ENCODE measurements at regions of chr18 and their contacts with region 1.

Region 1: DNA sequence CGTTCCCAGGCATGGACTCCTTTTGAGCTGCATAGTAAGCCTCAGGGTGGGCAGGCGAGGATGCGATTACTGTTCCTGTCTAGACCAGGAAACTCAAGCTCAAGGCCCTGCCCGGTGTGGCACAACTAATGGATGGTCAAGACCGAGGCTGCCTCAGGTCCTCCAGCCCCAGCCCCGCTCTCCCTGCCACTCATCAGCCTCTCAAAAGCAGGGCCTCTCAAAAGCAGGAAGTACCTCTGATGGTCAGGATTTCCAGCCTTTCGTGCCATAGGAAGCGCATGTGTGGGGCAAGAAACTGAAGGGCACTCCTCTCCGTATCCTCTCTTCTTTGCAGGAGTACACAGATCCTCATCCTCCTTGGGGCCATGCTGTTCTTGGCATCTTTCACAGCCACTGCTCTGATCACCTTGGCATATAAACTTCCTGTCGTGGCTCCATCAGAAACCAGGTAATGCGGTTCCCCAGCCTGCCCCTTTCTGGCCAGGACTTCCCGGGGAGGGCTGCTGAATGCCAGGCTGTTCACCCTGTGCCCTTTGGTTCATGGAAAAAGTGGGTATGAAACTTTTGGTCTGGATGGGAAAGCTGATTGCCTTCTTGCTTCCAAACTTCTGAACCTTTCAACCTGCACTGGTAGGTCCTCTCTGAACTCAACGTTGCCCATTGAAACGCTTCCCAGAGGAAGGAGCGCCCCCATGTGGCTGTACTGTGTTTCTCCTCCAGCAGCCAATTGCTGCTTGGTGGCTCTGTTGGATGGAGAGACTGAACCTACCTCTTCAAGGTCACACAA is 82.8 kb upstream of the SEC11C start:
- DNase-seq: peak; percentile 82 to 87
- ATAC-seq: peak; percentile 30 to 86 (median 70)
- H3K4me3 ChIP-seq: no peak overlapping the region
- H3K27ac ChIP-seq: peak overlapping the region in 4 of 10 donors; percentile 12 to 26 (median 23)
- H3K4me1 ChIP-seq: peaks cover 0 to 33% (median 5%) of the 10 kb centered on the region in 9 donors
- H3K27me3 ChIP-seq: no peaks in the 10 kb centered on the region
- CTCF ChIP-seq: peak in 8 of 9 donors; percentile 40 to 94 (median 87)

Region 2: GRCh38 chr18:58991167-58991798 is 65.6 kb before region 1 on chr18:
- intact Hi-C with region 1: loop called in 3 of 10 experiments (anchors 5 kb)
- DNase-seq: no peak
- ATAC-seq: peak in 7 of 8 donors; percentile 27 to 78 (median 52)
- H3K4me3 ChIP-seq: no peak overlapping the region
- H3K27ac ChIP-seq: peak overlapping the region in 9 of 10 donors; percentile 70 to 94 (median 87)
- H3K4me1 ChIP-seq: peaks cover 8 to 68% (median 56%) of the 10 kb centered on the region in 9 donors
- H3K27me3 ChIP-seq: no peaks in the 10 kb centered on the region
- CTCF ChIP-seq: no peak

Region 3: DNA sequence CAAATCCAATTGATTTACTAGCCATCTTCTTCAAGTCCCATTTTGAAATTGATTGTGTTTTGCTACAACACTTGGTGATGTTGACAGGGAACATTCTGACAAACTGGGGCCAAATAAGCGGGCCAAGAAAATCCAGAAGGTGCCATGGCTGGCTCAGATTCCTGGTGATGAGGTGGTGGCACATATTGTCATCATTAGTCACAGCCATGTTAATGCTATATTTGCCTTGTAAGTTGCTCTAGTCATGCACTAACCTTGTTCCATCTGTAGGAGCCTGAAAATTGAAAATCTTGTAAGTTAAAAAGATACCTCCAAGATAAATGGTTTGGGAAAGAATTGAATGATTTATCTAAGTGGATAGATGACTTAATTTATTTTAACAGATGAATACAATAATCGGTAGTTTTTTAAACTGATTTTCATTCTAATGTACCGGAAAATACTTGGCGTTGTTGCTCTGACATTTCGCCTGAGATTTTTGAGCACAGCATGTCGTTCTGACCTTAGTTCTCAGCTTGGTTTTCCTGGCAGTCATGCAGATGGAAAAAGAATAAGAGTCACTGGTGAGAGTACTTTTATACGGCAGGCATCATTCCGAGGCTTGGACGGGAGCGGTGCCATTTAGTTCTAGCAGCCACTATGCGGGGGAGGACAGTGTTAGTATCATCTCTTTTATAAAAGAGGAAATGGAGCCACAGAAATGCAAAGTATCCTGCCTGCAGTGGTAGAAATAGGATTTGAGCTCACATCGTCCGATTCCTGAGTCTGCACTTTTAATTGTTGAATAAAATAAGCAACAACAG is 58.3 kb before region 1 on chr18:
- intact Hi-C with region 1: loop called in 4 of 10 experiments (anchors 5 kb)
- DNase-seq: peak; percentile 52 to 83
- ATAC-seq: peak; percentile 57 to 92 (median 80)
- H3K4me3 ChIP-seq: peak overlapping the region in 6 of 10 donors; percentile 3 to 34 (median 19)
- H3K27ac ChIP-seq: peak overlapping the region; percentile 70 to 94 (median 87)
- H3K4me1 ChIP-seq: peaks cover 6 to 68% (median 49%) of the 10 kb centered on the region in 9 donors
- H3K27me3 ChIP-seq: no peaks in the 10 kb centered on the region
- CTCF ChIP-seq: peak in 1 of 9 donors; percentile 4

Region 4: DNA sequence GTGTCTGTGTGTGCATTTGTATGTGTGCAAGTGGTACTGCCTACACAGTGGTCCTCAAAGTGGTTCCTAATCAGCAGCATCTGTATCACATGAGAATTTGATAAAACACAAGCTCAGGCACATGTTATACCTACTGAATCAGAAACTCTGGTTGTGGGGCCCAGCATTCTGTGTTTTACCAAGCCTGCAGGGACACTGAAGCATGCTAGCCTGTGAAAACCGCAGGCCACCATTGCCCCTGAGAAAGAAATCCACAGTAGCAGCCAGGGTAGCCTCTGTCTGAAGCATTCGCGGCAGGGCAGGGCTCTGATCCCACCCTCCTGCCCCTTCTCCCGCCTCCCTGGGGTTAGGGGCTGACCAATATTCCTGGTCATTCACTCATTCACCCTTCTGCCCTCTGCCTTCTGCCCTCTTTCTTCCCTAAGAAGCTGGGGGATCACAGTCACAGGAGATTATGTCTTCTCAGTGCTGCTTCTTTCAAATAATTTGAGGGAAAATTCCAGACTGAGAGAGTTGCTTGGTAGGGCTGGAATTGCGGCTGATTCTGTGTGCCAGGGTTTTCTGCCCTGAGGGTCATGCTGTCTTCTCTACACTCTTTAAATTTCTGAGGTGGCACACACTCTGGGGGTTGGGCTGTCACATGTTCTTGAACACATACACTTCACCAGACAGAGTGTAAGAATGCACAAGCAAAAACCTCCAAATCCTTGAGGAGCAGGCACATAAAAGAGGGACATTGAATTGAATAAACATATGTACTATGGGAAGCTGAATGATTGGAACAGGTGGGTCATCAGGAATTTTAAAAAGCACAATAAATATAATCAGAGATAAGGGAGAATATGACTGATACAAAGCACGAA is 43.9 kb before region 1 on chr18:
- intact Hi-C with region 1: no loop called
- DNase-seq: no peak
- ATAC-seq: no peak
- H3K4me3 ChIP-seq: no peak overlapping the region
- H3K27ac ChIP-seq: no peak overlapping the region
- H3K4me1 ChIP-seq: peaks cover 0 to 18% (median 7%) of the 10 kb centered on the region in 9 donors
- H3K27me3 ChIP-seq: no peaks in the 10 kb centered on the region
- CTCF ChIP-seq: no peak

Region 5: DNA sequence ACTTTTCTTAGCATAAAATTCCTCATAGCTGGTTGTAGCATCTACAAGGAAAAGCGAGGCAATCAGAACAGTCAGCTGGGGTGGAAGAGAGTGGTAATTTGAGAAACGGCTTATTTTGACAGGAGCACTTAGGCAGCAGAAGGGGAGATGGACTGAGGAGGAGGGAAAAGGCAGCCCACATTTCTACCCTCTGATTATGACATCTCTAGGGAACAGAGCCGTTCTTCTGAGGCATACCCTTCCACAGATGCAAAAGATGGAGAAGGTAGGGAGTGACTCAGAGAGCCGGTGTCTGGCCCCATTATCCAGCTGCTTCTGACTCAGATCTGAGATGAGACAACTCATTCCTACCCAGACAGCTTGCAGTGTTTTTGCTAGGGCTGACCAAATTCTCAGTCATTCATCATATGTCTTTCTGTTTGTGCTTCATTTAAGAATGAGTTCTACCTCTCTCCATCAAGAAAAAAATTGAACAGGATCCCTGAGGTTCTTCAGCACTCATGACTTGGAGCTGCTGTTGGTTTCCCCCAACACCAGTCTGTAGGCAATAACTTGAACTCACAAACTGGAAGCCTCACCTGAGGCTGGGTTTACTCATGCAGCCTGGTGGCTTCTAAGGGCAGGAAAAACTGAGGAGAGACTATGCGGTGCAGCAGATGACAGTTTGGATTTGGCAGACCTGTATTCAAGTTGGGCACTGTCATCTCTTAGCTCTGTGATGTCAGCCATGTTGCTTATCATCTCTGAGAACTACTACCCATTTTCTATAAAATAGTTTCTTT is 66.9 kb after region 1 on chr18:
- intact Hi-C with region 1: no loop called
- DNase-seq: no peak
- ATAC-seq: no peak
- H3K4me3 ChIP-seq: no peak overlapping the region
- H3K27ac ChIP-seq: no peak overlapping the region
- H3K4me1 ChIP-seq: no peaks in the 10 kb centered on the region
- H3K27me3 ChIP-seq: peaks cover 0 to 53% (median 18%) of the 10 kb centered on the region in 7 donors
- CTCF ChIP-seq: no peak

Region 6: DNA sequence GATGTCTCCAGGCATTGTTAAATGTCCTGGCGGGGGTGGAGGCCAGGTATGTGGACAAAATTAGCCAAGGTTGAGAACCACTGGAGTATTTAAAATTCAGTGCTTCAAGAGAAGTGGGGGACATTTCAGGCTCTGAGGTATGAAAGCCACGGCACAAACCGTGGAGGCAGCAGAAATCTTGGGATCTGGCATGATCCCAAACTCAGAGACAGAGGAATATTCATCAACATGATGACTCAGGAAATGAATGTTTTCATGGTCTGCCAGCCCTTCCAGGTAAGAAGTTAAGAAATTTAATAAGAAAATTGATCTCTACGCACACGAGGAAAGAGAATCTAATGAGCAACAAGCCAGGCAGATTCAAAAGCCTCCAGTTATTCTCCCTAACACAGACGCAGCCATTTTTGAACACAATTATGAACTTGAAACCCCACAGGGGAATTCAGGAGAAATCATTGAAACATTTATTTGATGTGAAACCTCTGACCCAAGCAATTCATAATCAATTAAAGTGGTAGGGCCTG is 151.8 kb after region 1 on chr18:
- intact Hi-C with region 1: no loop called
- DNase-seq: no peak
- ATAC-seq: no peak
- H3K4me3 ChIP-seq: no peak overlapping the region
- H3K27ac ChIP-seq: no peak overlapping the region
- H3K4me1 ChIP-seq: no peaks in the 10 kb centered on the region
- H3K27me3 ChIP-seq: peaks cover 0 to 21% (median 9%) of the 10 kb centered on the region in 7 donors
- CTCF ChIP-seq: no peak